Cardiac septum (tissue), 1 donor: ENCODE measurements at regions of chr1 and their contacts with region 1.

Region 1: GRCh38 chr1:171485375-171486047 is at the start of gene PRRC2C:
- DNase-seq: peak; percentile 98
- total RNA-seq, gene PRRC2C: 68.6 TPM

Region 2: GRCh38 chr1:171434717-171435346 is 50.7 kb before region 1 on chr1:
- intact Hi-C with region 1: loop called (anchors 2 kb)
- DNase-seq: no peak

Region 3: DNA sequence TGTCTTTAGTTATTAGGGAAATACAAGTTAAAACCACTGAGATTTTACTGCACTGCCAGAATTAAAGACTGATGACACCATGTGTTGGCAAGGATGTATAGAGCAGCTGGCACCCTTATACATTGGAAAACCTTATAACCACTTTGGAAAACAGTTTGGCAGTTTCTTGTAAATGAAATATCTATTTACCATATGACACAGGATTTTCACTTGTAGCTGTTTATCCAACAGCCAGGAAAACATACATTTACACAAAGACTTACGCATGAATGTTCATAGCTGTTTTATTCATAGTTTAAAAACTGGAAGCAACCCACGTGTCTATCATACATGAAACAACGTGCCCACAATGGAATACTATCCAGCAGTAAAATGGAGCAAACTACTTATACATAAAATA is 45.2 kb after region 1 on chr1:
- intact Hi-C with region 1: no loop called
- DNase-seq: no peak